B cell (primary cell): ENCODE measurements at regions of chr14 and their contacts with region 1.

Region 1: DNA sequence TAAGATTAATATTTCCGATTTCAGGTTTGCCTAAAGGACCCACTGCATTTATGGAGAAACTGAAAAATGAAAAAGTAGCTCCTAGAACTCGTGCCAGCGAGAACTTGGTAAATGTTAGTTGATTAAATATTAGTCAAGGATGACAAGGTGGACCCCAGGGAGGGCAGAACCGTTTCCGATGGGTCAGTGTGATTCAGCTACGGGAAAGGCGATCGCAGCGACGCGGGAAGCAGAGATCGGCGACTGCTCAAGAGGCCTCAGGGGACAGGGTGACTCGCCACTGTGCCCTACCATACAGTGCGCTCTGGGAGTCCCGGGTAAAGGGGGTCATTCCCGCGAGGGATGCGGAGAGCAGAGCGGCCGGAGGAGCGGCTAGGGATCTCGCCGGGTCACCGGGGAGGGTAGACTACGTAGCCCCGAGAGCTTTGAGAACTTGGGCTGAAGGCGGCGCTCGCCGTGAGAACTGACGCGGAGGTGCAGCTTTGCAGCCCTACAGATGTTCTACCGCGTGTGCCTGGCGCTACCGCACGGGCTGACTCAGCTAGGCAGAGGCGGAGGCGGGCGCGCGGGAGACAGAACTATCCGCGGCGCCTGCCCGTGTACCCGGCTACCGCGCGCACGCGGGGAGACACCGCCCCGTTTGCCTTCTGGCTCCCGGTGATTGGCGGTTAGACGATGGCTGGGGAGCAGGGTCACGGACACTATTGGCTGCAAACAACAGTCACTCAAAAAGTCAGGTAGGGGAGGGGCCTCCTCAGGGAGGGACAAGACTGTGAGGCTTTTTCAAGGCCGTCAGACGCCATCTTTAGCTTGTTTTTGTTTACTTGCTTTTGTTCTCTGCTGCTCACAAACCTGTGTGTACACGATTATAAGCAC is 3.2 kb downstream of the C14orf93 start:
- DNase-seq: peak; percentile 98
- ATAC-seq: peak; percentile 91
- H3K4me3 ChIP-seq: peak overlapping the region; percentile 70 to 95 (median 85)
- H3K4me3 Mint-ChIP-seq: peak overlapping the region; percentile 99
- H3K27ac ChIP-seq: peak overlapping the region; percentile 75 to 88
- H3K27ac Mint-ChIP-seq: peak overlapping the region; percentile 98
- H3K4me1 ChIP-seq: peaks cover 24 to 32% of the 10 kb centered on the region in 2 donors
- H3K4me1 Mint-ChIP-seq: peaks cover 42% of the 10 kb centered on the region
- H3K27me3 ChIP-seq: no peaks in the 10 kb centered on the region
- H3K27me3 Mint-ChIP-seq: no peaks in the 10 kb centered on the region
- CTCF ChIP-seq: no peak

Region 2: DNA sequence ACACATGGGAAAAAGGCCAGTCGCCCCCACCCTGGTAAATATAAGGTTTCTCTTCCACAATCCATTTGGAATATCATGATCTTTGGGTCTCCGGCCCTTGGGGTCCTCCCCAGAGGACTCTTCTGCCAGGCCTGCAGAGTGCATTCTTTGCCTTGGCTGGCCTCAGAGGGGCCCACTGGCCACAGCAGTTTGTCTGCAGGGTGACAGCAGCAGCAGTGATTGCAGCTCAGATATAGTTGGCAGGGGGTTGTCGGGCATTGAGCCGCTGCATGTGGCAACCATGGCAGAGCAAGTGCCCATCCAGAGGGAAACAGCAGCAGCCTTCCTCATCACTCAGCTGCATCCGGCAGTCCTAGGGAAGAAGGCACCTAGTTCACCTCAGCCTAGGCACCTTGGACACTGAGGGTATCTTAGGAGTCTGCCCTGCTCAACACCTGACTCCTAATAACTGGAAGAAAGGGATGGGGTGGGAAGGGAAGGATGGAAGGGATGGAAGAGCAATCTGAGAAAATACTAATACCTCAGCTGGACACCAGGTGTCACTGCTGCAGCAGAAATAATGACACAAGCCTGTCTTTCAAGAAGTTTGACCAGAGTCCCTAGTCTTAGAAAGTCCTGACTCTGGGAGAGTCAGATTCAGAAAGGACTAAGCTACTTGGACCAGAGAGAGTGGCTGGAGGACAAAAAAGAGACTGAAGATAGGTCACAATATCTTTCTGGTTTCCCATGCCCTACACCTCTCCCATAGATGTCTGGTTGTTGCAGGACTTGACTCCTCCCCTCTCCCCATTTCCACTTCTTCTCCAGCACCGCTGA is 33.4 kb before region 1 on chr14:
- CTCF ChIA-PET with region 1: interaction called, 11 read pairs
- POLR2A ChIA-PET with region 1: no interaction called
- intact Hi-C with region 1: no loop called
- DNase-seq: peak; percentile 69
- ATAC-seq: peak; percentile 54
- H3K4me3 ChIP-seq: no peak overlapping the region
- H3K4me3 Mint-ChIP-seq: no peak overlapping the region
- H3K27ac ChIP-seq: no peak overlapping the region
- H3K27ac Mint-ChIP-seq: no peak overlapping the region
- H3K4me1 ChIP-seq: peaks cover 0 to 5% of the 10 kb centered on the region in 2 donors
- H3K4me1 Mint-ChIP-seq: peaks cover 4% of the 10 kb centered on the region
- H3K27me3 ChIP-seq: peaks cover 0 to 5% (median 2%) of the 10 kb centered on the region in 4 experiments
- H3K27me3 Mint-ChIP-seq: peaks cover 15% of the 10 kb centered on the region
- CTCF ChIP-seq: peak; percentile 79

Region 3: DNA sequence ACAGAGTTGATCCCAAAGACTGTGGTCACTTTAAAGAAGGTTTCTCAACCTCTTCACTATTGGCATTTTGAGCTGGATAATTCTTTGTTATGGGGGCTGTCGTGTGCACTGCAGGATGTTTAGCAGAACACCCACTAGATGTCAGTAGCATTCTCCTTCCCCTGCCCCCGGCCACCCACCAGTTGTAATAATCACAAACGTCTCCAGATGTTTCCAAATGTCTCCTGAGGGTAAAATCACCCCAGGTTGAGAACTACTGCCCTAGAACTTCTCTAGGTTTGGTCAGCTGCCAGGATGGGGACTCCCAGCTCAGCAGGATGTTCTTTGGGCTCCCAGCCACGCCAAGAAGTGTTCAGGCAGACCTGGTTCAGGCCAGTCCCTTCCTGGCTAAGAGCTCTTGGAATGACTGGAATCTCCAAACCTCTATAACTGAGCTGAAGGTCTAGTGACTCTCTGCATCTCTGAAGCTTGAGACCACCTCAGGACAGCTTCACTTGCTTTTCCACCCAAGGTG is 12.0 kb before region 1 on chr14:
- CTCF ChIA-PET with region 1: interaction called, 47 read pairs
- POLR2A ChIA-PET with region 1: interaction called, 11 read pairs
- intact Hi-C with region 1: no loop called
- DNase-seq: peak; percentile 44
- ATAC-seq: peak; percentile 58
- H3K4me3 ChIP-seq: no peak overlapping the region
- H3K4me3 Mint-ChIP-seq: no peak overlapping the region
- H3K27ac ChIP-seq: no peak overlapping the region
- H3K27ac Mint-ChIP-seq: no peak overlapping the region
- H3K4me1 ChIP-seq: no peaks in the 10 kb centered on the region
- H3K4me1 Mint-ChIP-seq: peaks cover 2% of the 10 kb centered on the region
- H3K27me3 ChIP-seq: no peaks in the 10 kb centered on the region
- H3K27me3 Mint-ChIP-seq: no peaks in the 10 kb centered on the region
- CTCF ChIP-seq: peak; percentile 49

Region 4: GRCh38 chr14:23034483-23035302 is 27.9 kb after region 1 on chr14 and contains the start of gene PSMB5:
- CTCF ChIA-PET with region 1: interaction called, 6 read pairs
- POLR2A ChIA-PET with region 1: interaction called, 8 read pairs
- intact Hi-C with region 1: loop called (anchors 1 kb)
- DNase-seq: peak; percentile 96
- ATAC-seq: peak; percentile 92
- H3K4me3 ChIP-seq: peak within 1 kb of the TSS; percentile 62 to 100 (median 66)
- H3K4me3 Mint-ChIP-seq: peak within 1 kb of the TSS; percentile 86
- H3K27ac ChIP-seq: peak within 1 kb of the TSS; percentile 81 to 93
- H3K27ac Mint-ChIP-seq: peak within 1 kb of the TSS; percentile 93
- H3K4me1 ChIP-seq: peaks cover 14 to 20% of the 10 kb centered on the region in 2 donors
- H3K4me1 Mint-ChIP-seq: peaks cover 28% of the 10 kb centered on the region
- H3K27me3 ChIP-seq: no peaks in the 10 kb centered on the region
- H3K27me3 Mint-ChIP-seq: no peaks in the 10 kb centered on the region
- CTCF ChIP-seq: no peak
- total RNA-seq, gene PSMB5: 29.0 and 31.9 TPM in 2 replicates

Region 5: GRCh38 chr14:23068476-23069412 is 62.0 kb after region 1 on chr14:
- CTCF ChIA-PET with region 1: interaction called, 1,134 read pairs
- POLR2A ChIA-PET with region 1: no interaction called
- intact Hi-C with region 1: no loop called
- DNase-seq: peak; percentile 87
- ATAC-seq: peak; percentile 85
- H3K4me3 ChIP-seq: no peak overlapping the region
- H3K4me3 Mint-ChIP-seq: no peak overlapping the region
- H3K27ac ChIP-seq: peak overlapping the region; percentile 10 to 28
- H3K27ac Mint-ChIP-seq: peak overlapping the region; percentile 83
- H3K4me1 ChIP-seq: peaks cover 21 to 41% of the 10 kb centered on the region in 2 donors
- H3K4me1 Mint-ChIP-seq: peaks cover 38% of the 10 kb centered on the region
- H3K27me3 ChIP-seq: no peaks in the 10 kb centered on the region
- H3K27me3 Mint-ChIP-seq: no peaks in the 10 kb centered on the region
- CTCF ChIP-seq: peak; percentile 99